AG04449 (cell line): ENCODE measurements at regions of chr1 and their contacts with region 1.

Region 1: GRCh38 chr1:214261206-214262123 is 19.5 kb upstream of the SMYD2 start:
- DNase-seq: peak; percentile 23
- H3K4me3 ChIP-seq: 0 out of 2 replicates have a peak overlapping the region, but pooled peaks have one; percentile 21
- CTCF ChIP-seq: peak; percentile 97

Region 2: GRCh38 chr1:214086945-214087344 is 174.5 kb before region 1 on chr1:
- CTCF ChIA-PET with region 1: no interaction called
- POLR2A ChIA-PET with region 1: no interaction called
- DNase-seq: no peak
- H3K4me3 ChIP-seq: no peak overlapping the region
- CTCF ChIP-seq: no peak

Region 3: DNA sequence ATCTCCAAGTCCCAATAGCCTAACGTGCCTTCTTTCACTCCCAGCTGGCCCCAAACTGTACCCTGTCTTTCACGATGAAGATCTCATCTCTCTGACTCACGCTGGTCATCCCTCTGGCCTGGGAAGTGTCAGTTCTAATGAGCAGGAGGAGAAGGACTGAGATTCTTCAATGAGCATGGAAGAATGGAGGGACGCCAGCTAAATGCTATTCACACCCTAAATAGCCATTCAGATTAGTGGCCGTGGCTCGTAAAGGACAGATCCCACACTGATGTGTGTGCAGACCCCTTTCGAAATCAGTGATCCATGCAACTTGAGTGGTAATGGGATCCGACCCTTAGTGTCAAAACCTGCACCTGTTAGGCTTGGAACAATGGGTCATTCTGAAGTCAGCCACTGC is 56.4 kb before region 1 on chr1:
- CTCF ChIA-PET with region 1: interaction called, 24 read pairs
- POLR2A ChIA-PET with region 1: no interaction called
- DNase-seq: no peak
- H3K4me3 ChIP-seq: no peak overlapping the region
- CTCF ChIP-seq: no peak

Region 4: DNA sequence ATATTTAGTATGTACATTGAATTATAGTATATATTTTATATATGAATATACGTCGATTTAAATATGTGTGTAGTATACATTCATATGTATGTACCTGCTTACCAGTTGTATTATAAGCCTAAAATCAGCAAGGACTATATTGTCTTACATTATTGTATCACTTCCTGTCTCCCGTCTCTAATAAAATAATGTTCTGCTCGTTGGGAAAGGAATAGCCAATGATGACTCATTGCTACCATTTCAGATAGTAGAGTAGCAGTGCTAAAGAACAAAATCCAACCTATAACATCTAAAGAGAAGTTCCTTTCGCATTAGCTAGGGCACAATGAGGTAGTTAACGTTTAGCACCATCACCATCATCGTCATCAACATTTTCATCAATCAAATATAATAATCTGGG is 20.4 kb before region 1 on chr1:
- CTCF ChIA-PET with region 1: interaction called, 37 read pairs
- POLR2A ChIA-PET with region 1: no interaction called
- DNase-seq: no peak
- H3K4me3 ChIP-seq: no peak overlapping the region
- CTCF ChIP-seq: no peak

Region 5: GRCh38 chr1:214289574-214290272 is 28.3 kb after region 1 on chr1:
- CTCF ChIA-PET with region 1: interaction called, 27 read pairs
- POLR2A ChIA-PET with region 1: no interaction called
- DNase-seq: no peak
- H3K4me3 ChIP-seq: no peak overlapping the region
- CTCF ChIP-seq: no peak

Region 6: GRCh38 chr1:214310010-214310409 is 48.5 kb after region 1 on chr1:
- CTCF ChIA-PET with region 1: interaction called, 99 read pairs
- POLR2A ChIA-PET with region 1: no interaction called
- DNase-seq: no peak
- H3K4me3 ChIP-seq: no peak overlapping the region
- CTCF ChIP-seq: no peak

Region 7: DNA sequence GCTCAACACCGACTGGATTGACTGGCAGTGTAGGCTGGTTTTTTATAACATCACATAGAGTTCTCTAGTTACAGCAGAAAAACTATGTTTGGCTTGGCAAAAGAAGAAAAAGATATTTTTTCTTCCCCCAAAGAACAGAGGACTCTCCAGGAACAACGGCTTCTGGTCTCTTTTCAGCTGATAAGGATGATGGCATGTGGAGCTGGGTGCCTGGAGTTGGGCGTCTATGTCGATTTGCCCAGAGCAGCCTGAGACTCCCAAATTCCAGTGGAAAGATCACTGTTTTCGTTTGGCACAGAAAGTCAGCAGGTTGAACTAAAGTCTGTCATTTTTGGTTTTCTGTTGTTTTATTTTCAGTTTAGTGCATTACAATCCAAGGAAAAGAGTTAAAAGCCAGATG is 110.6 kb after region 1 on chr1:
- CTCF ChIA-PET with region 1: no interaction called
- POLR2A ChIA-PET with region 1: no interaction called
- DNase-seq: no peak
- H3K4me3 ChIP-seq: no peak overlapping the region
- CTCF ChIP-seq: no peak

Region 8: DNA sequence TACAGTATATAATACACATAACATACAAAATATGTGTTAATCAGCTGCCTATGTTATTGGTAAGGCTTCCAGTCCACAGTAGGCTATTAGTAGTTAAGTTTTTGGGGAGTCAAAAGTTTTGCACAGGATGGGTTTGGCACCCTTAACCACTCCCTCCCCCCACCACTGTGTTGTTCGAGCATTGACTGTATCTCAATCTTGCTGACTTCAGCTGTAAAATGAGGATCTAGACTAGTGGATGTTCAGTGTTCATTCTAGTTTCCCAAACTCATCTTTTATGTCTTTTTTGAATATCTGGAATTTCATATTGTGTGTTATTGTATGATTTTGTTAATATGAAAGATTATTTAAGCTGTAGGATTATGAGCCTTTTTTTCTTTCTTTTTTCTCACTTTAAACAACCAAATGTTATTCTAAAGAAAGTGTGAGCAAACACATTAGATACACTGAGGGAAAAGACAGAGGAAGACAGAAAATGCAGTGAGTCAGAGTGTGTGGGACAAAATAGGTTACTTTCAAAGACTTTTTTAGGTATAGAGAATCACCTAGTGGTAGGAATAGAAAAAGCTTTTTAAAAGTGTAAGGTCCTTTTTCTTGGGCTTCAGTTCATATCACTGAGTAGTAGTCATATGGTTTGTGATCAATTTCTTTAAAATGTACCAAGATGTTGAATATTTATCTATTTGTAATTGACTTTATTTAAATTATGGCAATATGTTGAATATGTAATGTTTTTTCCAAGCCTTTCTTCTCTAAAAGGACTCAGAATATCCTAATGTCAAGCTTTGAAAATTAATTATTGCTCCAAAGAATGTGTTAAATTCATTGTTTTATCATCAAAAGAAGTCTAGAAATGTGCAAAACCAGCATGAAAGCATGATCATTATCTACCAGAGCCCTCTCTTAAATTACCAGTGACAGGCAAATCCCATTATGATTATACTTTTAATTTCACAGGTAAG is 323.6 kb after region 1 on chr1:
- CTCF ChIA-PET with region 1: interaction called, 11 read pairs
- POLR2A ChIA-PET with region 1: no interaction called
- DNase-seq: no peak
- H3K4me3 ChIP-seq: no peak overlapping the region
- CTCF ChIP-seq: peak; percentile 45